Common myeloid progenitor, CD34-positive (primary cell): ENCODE measurements at regions of chr21 and their contacts with region 1.

Region 1: GRCh38 chr21:15520811-15521636 is 208.8 kb upstream of the USP25 start:
- DNase-seq: peak in 2 of 3 donors; percentile 41 to 43
- H3K4me3 ChIP-seq: no peak overlapping the region
- H3K27ac ChIP-seq: no peak overlapping the region
- H3K4me1 ChIP-seq: peaks cover 0 to 8% (median 2%) of the 10 kb centered on the region in 4 experiments
- H3K27me3 ChIP-seq: no peaks in the 10 kb centered on the region

Region 2: DNA sequence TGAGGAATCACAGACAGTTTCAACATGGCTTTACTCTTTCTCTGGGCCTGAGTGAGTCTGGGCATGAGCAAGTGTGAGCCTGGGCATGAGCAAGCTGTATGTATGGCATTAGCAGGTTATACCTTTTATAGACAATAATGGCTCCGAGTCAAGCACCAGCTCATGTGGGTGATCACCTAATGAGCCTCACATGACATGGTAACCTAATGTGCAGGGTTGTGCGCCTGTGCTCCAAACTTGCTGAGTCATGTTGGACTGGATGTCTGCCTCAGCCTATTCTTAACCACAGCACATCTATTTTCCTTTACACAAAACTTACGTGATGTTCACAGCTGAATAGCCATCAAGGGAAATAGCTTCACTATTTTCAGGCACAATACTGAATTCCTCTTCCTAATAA is 220.0 kb before region 1 on chr21:
- CTCF ChIA-PET with region 1: no interaction called
- POLR2A ChIA-PET with region 1: no interaction called
- DNase-seq: peak; percentile 28 to 83 (median 76)
- H3K4me3 ChIP-seq: peak overlapping the region in 1 of 7 experiments; percentile 3
- H3K27ac ChIP-seq: no peak overlapping the region
- H3K4me1 ChIP-seq: peaks cover 0 to 8% (median 4%) of the 10 kb centered on the region in 4 experiments
- H3K27me3 ChIP-seq: no peaks in the 10 kb centered on the region

Region 3: DNA sequence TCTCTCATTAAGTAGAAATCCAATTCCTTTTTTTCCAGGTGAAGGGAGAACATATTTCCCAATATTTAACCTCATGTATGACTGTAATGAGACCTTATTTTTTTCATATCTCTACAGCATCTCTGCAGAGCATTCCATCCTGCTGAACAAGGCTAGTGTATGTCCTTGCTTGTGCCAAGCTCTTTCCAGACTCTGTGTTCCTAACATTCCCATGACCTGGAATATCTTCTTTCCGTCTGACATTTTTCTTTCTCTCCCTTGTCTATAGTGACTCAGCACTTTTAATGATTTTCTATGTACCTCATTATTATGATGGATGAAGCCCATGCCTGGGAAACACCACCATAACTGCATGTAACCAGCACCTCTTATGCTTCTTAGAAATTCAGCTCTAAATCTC is 178.0 kb before region 1 on chr21:
- CTCF ChIA-PET with region 1: no interaction called
- POLR2A ChIA-PET with region 1: no interaction called
- DNase-seq: no peak
- H3K4me3 ChIP-seq: no peak overlapping the region
- H3K27ac ChIP-seq: no peak overlapping the region
- H3K4me1 ChIP-seq: peaks cover 0 to 4% (median 0%) of the 10 kb centered on the region in 4 experiments
- H3K27me3 ChIP-seq: no peaks in the 10 kb centered on the region

Region 4: GRCh38 chr21:15534450-15534886 is 13.4 kb after region 1 on chr21:
- CTCF ChIA-PET with region 1: interaction called, 18 read pairs
- POLR2A ChIA-PET with region 1: interaction called, 4 read pairs
- DNase-seq: peak; percentile 67 to 90 (median 84)
- H3K4me3 ChIP-seq: peak overlapping the region in 6 of 7 experiments; percentile 32 to 66 (median 46)
- H3K27ac ChIP-seq: peak overlapping the region; percentile 52 to 60
- H3K4me1 ChIP-seq: peaks cover 4 to 25% (median 9%) of the 10 kb centered on the region in 4 experiments
- H3K27me3 ChIP-seq: no peaks in the 10 kb centered on the region